GM13977 (cell line): ENCODE measurements at regions of chr6 and their contacts with region 1.

Region 1: GRCh38 chr6:158972241-158973233 is 27.5 kb downstream of the RSPH3 start:
- DNase-seq: peak; percentile 49
- CTCF ChIP-seq: peak; percentile 44

Region 2: GRCh38 chr6:158697811-158698210 is 274.7 kb before region 1 on chr6:
- in situ Hi-C with region 1: loop called (anchors 5 kb)
- DNase-seq: no peak
- CTCF ChIP-seq: no peak

Region 3: DNA sequence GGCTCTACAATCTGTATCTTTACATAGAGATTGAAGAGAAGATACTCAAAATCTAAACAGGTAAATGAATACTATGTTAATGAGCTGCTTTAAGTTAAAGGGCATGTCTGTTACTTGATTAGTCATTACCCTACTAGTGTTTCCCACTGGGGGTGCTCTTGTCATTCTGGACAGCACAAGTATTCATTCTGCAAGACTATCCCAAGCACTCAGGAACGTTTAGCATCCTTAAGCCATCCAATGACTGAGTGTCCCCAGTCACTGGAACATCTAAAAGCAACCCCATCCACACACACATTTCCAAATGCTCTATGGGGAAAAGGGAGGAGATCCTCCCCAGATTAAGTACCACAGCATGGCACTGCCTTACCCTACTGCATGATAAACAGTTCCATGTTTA is 179.1 kb before region 1 on chr6:
- in situ Hi-C with region 1: loop called (anchors 10 kb)
- DNase-seq: no peak
- CTCF ChIP-seq: peak; percentile 61